Endothelial cell of umbilical vein (primary cell): ENCODE measurements at regions of chr6 and their contacts with region 1.

Region 1: DNA sequence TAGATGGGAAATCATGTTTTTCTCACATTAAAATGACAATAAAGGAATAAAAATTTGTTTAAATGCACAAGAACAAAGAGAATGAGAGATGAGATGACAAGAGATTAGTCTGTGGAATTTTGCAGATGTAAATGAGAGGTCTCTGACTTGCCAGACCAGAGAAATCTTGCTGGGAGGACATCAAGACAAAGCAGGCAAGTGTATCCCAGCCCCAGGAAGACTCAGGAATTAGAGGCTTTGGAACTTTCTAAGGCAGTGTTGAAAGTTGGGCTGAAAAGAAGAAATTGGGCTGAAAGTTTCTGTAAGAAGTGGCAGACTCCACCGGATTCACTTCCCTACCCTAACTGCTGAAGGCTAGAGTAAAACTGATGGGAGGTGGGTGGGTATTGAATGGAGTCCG is 54.6 kb downstream of the AFDN start:
- DNase-seq: no peak
- H3K4me3 ChIP-seq: no peak overlapping the region
- H3K27ac ChIP-seq: no peak overlapping the region
- H3K4me1 ChIP-seq: peaks cover 7% of the 10 kb centered on the region
- H3K27me3 ChIP-seq: no peaks in the 10 kb centered on the region
- CTCF ChIP-seq: no peak
- POLR2A ChIP-seq: no peak

Region 2: DNA sequence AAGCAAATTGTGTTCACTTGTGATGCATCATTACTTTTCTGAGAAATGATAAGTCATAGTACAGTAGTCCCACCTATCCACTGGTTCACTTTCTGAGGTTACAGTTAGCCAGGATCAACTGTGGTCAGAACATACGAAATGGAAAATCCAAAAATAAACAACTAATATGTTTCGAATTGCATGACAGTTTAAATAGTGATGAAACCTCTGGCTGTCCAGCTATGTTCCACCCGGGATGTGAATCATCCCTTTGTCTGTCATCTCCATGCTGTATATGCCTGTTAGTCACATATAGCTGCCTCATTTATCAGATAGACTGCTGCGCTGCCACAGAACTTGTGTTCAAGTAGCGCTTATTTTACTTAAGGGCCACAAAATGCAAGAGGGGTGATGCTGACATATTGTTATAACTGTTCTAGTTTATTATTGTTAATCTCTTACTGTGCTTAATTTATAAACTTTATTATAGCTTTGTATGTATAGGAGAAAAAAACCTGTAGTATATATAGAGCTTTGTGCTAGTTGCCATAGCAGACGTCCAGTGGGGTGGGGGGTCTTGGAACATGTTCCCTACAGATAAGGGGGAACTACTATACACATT is 25.4 kb before region 1 on chr6:
- CTCF ChIA-PET with region 1: interaction called, 3 read pairs
- POLR2A ChIA-PET with region 1: no interaction called
- dilution Hi-C with region 1: no loop called
- intact Hi-C with region 1: loop called (anchors 2 kb)
- DNase-seq: peak; percentile 42
- H3K4me3 ChIP-seq: no peak overlapping the region
- H3K27ac ChIP-seq: peak overlapping the region; percentile 52
- H3K4me1 ChIP-seq: peaks cover 27% of the 10 kb centered on the region
- H3K27me3 ChIP-seq: no peaks in the 10 kb centered on the region
- CTCF ChIP-seq: no peak
- POLR2A ChIP-seq: no peak